ENCODE measurements at regions of chr1 and their contacts with region 1.

Region 1: GRCh38 chr1:67500413-67500959 is 70.3 kb upstream of the SERBP1 start:
- DNase-seq: peak; percentile 73 to 92 (median 81)
- ATAC-seq: peak; percentile 100
- H3K4me3 ChIP-seq: no peak overlapping the region
- H3K4me3 Mint-ChIP-seq: no peak overlapping the region
- H3K27ac ChIP-seq: no peak overlapping the region
- H3K27ac Mint-ChIP-seq: no peak overlapping the region
- H3K4me1 ChIP-seq: peaks cover 7% of the 10 kb centered on the region
- H3K4me1 Mint-ChIP-seq: no peaks in the 10 kb centered on the region
- H3K27me3 ChIP-seq: peaks cover 0 to 3% of the 10 kb centered on the region in 2 experiments
- H3K27me3 Mint-ChIP-seq: no peaks in the 10 kb centered on the region
- CTCF ChIP-seq: peak; percentile 99

Region 2: GRCh38 chr1:66996018-66996682 is 504.3 kb before region 1 on chr1:
- CTCF ChIA-PET with region 1: no interaction called
- POLR2A ChIA-PET with region 1: no interaction called
- intact Hi-C with region 1: loop called (anchors 5 kb)
- DNase-seq: peak; percentile 32 to 78 (median 52)
- ATAC-seq: peak; percentile 89
- H3K4me3 ChIP-seq: no peak overlapping the region
- H3K4me3 Mint-ChIP-seq: no peak overlapping the region
- H3K27ac ChIP-seq: no peak overlapping the region
- H3K27ac Mint-ChIP-seq: peak overlapping the region; percentile 2
- H3K4me1 ChIP-seq: peaks cover 5% of the 10 kb centered on the region
- H3K4me1 Mint-ChIP-seq: peaks cover 28% of the 10 kb centered on the region
- H3K27me3 ChIP-seq: no peaks in the 10 kb centered on the region
- H3K27me3 Mint-ChIP-seq: no peaks in the 10 kb centered on the region
- CTCF ChIP-seq: peak; percentile 73

Region 3: DNA sequence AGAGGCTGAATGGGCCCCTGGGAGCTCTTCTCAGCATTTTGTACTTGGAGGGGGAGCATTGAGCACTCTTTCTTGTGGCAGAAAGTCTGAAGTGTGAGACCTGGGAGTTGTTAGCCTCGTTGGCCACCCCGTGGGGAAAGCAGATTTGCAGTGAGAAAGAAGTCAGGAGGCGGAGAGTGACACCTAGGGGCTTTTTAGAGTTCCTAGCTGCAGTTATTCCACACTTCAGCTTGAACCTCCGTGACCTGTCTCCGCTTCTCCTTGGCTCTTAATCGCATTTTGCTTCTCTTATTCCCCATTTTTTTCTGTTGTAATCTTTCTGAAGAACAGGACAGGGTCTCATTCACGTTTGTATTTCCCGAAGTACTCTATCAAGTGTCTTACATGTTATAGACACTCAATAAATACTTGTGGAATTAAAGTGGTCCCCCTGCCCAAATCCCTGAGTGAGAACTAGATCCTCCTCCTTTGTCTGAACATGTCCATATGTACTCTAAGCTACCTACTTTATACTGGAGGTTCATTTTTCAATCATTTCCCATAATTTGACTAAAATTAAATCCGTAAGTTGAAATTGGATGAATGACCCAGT is 351.2 kb before region 1 on chr1:
- CTCF ChIA-PET with region 1: interaction called, 4 read pairs
- POLR2A ChIA-PET with region 1: no interaction called
- intact Hi-C with region 1: loop called in 1 of 2 experiments (anchors 5 kb)
- DNase-seq: peak; percentile 32 to 83 (median 56)
- ATAC-seq: peak; percentile 93
- H3K4me3 ChIP-seq: no peak overlapping the region
- H3K4me3 Mint-ChIP-seq: no peak overlapping the region
- H3K27ac ChIP-seq: no peak overlapping the region
- H3K27ac Mint-ChIP-seq: no peak overlapping the region
- H3K4me1 ChIP-seq: peaks cover 9% of the 10 kb centered on the region
- H3K4me1 Mint-ChIP-seq: peaks cover 31% of the 10 kb centered on the region
- H3K27me3 ChIP-seq: no peaks in the 10 kb centered on the region
- H3K27me3 Mint-ChIP-seq: no peaks in the 10 kb centered on the region
- CTCF ChIP-seq: peak; percentile 85

Region 4: GRCh38 chr1:67230539-67230938 is 269.9 kb before region 1 on chr1:
- CTCF ChIA-PET with region 1: interaction called, 17 read pairs
- POLR2A ChIA-PET with region 1: interaction called, 3 read pairs
- intact Hi-C with region 1: loop called (anchors 1 kb)
- DNase-seq: no peak
- ATAC-seq: no peak
- H3K4me3 ChIP-seq: no peak overlapping the region
- H3K4me3 Mint-ChIP-seq: no peak overlapping the region
- H3K27ac ChIP-seq: no peak overlapping the region
- H3K27ac Mint-ChIP-seq: no peak overlapping the region
- H3K4me1 ChIP-seq: no peaks in the 10 kb centered on the region
- H3K4me1 Mint-ChIP-seq: no peaks in the 10 kb centered on the region
- H3K27me3 ChIP-seq: no peaks in the 10 kb centered on the region
- H3K27me3 Mint-ChIP-seq: no peaks in the 10 kb centered on the region
- CTCF ChIP-seq: no peak

Region 5: DNA sequence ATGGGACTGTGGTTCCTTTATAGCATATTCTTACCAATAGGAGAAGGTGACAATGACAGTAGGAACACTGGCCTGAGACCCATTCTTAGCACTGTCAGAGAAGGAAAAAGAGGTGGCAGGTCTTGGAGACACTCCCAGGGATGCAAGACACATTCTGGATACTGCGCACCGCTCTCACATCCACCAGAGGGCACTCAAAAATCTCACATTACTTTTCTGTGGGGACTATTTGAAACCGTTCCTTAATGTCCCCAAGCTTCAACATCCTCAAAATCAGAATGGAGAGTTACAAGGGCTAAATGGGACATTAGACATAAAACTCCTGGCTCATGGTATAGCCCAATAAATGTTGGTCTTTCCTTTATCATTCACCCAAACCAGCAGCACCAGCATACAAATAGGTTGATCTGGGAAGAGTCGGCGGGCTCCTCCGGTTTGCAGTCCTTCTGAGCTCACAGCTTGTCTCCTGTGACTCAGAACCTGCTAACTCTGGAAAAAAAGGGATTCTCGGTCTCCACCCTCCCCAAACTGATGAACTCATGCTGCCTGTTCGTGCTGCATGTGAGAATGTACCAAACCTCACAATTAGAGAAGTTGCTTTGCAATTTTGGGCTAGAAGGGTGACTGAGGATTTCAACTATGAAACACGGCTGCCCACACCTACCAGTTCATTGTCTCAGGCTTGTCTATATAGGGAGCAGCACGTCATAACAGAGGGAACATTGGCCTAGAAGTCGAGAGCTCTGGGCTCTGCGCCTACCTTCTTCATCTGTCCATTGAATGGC is 152.6 kb before region 1 on chr1:
- CTCF ChIA-PET with region 1: interaction called, 5 read pairs
- POLR2A ChIA-PET with region 1: no interaction called
- intact Hi-C with region 1: loop called (anchors 1 to 2 kb)
- DNase-seq: peak in 4 of 14 experiments; percentile 9 to 31 (median 25)
- ATAC-seq: no peak
- H3K4me3 ChIP-seq: no peak overlapping the region
- H3K4me3 Mint-ChIP-seq: no peak overlapping the region
- H3K27ac ChIP-seq: no peak overlapping the region
- H3K27ac Mint-ChIP-seq: no peak overlapping the region
- H3K4me1 ChIP-seq: peaks cover 4% of the 10 kb centered on the region
- H3K4me1 Mint-ChIP-seq: peaks cover 7% of the 10 kb centered on the region
- H3K27me3 ChIP-seq: no peaks in the 10 kb centered on the region
- H3K27me3 Mint-ChIP-seq: no peaks in the 10 kb centered on the region
- CTCF ChIP-seq: peak; percentile 20

Region 6: GRCh38 chr1:67618285-67619018 is 118.0 kb after region 1 on chr1:
- CTCF ChIA-PET with region 1: no interaction called
- POLR2A ChIA-PET with region 1: no interaction called
- intact Hi-C with region 1: no loop called
- DNase-seq: no peak
- ATAC-seq: no peak
- H3K4me3 ChIP-seq: no peak overlapping the region
- H3K4me3 Mint-ChIP-seq: no peak overlapping the region
- H3K27ac ChIP-seq: no peak overlapping the region
- H3K27ac Mint-ChIP-seq: no peak overlapping the region
- H3K4me1 ChIP-seq: no peaks in the 10 kb centered on the region
- H3K4me1 Mint-ChIP-seq: no peaks in the 10 kb centered on the region
- H3K27me3 ChIP-seq: peaks cover 0 to 4% of the 10 kb centered on the region in 2 experiments
- H3K27me3 Mint-ChIP-seq: peaks cover 26% of the 10 kb centered on the region
- CTCF ChIP-seq: no peak